Dorsolateral prefrontal cortex (tissue), 120 donors: ENCODE measurements at regions of chr16 and their contacts with region 1.

Region 1: DNA sequence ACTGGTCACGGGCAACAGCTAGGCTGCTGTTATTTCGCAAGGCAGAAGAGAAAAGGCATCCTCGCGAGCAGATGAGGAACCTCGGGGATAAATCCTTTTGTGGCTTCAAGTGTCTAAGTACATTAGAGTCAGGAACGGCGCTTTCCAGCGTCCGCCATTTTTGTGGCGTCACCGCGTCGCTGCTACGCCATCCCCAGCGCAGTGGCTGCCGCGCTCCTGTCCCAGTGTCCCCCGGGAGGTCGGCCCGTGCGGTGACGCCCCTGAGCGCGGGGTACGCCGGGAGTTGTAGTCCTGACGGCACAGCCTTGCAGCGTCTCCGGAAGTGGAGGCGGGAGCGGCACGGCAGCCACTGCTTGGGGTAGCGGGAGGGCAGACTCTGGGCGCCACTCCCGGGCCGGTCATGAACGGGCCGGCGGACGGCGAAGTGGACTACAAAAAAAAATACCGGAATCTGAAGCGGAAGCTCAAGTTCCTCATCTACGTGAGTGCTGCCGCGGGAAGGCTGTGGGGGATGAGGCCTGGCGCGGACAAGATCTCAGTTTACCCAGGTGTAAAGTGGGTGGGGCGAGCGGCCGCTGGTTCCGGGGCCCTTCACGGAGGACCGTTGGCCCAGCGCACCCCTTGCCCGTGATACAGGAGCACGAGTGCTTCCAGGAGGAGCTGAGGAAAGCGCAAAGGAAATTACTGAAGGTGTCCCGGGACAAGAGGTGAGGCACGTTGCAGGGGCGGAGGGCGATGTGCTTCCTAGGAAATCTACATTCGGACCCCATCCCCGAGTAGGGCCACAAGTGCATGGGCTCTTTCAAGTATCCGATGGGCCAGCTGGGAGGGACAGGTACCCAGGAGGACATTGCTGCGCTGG is at the start of gene INO80E:
- DNase-seq: peak; percentile 98 to 100 (median 99)
- H3K4me3 ChIP-seq: peak within 1 kb of the TSS; percentile 64 to 100 (median 95)
- H3K27ac ChIP-seq: peak within 1 kb of the TSS; percentile 87 to 99 (median 98)
- H3K27me3 ChIP-seq: no peaks in the 10 kb centered on the region
- CTCF ChIP-seq: peak in 39 of 56 donors; percentile 1 to 56 (median 27)
- total RNA-seq, gene INO80E: 38.6 to 73.9 (median 52.6) TPM

Region 2: DNA sequence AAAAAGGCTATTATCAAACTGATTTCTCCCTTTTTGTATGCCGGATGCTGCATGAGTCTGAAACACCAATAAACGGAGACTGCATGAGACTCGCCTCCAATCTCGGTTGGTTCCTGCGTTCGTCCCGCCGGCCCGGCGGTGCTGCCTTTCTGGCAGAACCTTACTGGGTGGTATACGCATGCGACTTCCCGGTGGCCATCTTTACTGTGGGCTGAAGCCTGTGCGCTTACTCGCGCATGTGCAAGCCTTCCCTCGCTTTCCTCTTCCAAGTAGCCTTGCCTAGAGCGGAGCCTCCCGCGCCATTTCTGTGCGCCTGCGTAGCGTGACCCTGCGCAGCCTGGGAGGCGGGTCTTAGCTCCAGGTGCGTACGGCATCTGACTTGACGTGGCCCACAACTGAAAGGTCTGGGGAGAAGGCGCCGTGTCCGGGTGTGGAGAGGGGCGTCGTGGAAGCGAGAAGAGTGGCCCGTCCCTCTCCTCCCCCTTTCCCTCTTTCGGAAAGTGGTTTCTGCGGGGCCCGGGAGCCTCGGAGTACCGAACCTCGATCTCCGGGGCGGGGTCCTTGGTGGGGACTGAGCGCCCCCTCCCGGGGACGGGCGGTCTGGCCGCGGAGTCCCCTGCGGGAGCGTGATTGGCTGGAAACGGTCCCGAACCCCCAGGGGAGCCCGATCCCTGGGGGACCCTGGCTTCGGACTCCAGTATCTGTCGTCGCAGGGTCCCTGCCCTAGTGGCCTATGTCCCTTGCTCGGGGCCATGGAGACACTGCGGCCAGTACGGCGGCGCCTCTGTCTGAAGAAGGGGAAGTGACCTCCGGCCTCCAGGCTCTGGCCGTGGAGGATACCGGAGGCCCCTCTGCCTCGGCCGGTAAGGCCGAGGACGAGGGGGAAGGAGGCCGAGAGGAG is 180.1 kb before region 1 on chr16 and contains the start of gene PAGR1:
- intact Hi-C with region 1: loop called (anchors 5 to 10 kb)
- DNase-seq: peak; percentile 96 to 99 (median 98)
- H3K4me3 ChIP-seq: peak within 1 kb of the TSS; percentile 64 to 97 (median 84)
- H3K27ac ChIP-seq: peak within 1 kb of the TSS; percentile 79 to 99 (median 97)
- H3K27me3 ChIP-seq: no peaks in the 10 kb centered on the region
- CTCF ChIP-seq: peak; percentile 63 to 98 (median 88)
- total RNA-seq, gene PAGR1: 16.6 to 44.6 (median 24.7) TPM

Region 3: GRCh38 chr16:29862884-29863668 is 133.1 kb before region 1 on chr16 and contains the start of gene CDIPT:
- intact Hi-C with region 1: loop called in 1 of 2 experiments (anchors 2 kb)
- DNase-seq: peak; percentile 83 to 97 (median 96)
- H3K4me3 ChIP-seq: peak within 1 kb of the TSS; percentile 64 to 100 (median 95)
- H3K27ac ChIP-seq: peak within 1 kb of the TSS; percentile 89 to 99 (median 97)
- H3K27me3 ChIP-seq: no peaks in the 10 kb centered on the region
- CTCF ChIP-seq: peak in 54 of 56 donors; percentile 29 to 84 (median 70)
- total RNA-seq, gene CDIPT: 63.9 to 118 (median 94.7) TPM

Region 4: GRCh38 chr16:29961479-29962343 is 34.4 kb before region 1 on chr16 and contains the start of gene TMEM219:
- intact Hi-C with region 1: loop called (anchors 1 to 5 kb)
- DNase-seq: peak; percentile 82 to 97 (median 86)
- H3K4me3 ChIP-seq: peak within 1 kb of the TSS; percentile 59 to 98 (median 88)
- H3K27ac ChIP-seq: peak within 1 kb of the TSS; percentile 63 to 99 (median 97)
- H3K27me3 ChIP-seq: no peaks in the 10 kb centered on the region
- CTCF ChIP-seq: peak in 53 of 56 donors; percentile 17 to 74 (median 51)
- total RNA-seq, gene TMEM219: 63.3 to 177 (median 99.3) TPM

Region 5: GRCh38 chr16:30046184-30046583 is 50.0 kb after region 1 on chr16:
- intact Hi-C with region 1: loop called in 1 of 2 experiments (anchors 2 kb)
- DNase-seq: no peak
- H3K4me3 ChIP-seq: no peak overlapping the region
- H3K27ac ChIP-seq: no peak overlapping the region
- H3K27me3 ChIP-seq: no peaks in the 10 kb centered on the region
- CTCF ChIP-seq: no peak